ENCODE measurements at regions of chr22 and their contacts with region 1.

Region 1: DNA sequence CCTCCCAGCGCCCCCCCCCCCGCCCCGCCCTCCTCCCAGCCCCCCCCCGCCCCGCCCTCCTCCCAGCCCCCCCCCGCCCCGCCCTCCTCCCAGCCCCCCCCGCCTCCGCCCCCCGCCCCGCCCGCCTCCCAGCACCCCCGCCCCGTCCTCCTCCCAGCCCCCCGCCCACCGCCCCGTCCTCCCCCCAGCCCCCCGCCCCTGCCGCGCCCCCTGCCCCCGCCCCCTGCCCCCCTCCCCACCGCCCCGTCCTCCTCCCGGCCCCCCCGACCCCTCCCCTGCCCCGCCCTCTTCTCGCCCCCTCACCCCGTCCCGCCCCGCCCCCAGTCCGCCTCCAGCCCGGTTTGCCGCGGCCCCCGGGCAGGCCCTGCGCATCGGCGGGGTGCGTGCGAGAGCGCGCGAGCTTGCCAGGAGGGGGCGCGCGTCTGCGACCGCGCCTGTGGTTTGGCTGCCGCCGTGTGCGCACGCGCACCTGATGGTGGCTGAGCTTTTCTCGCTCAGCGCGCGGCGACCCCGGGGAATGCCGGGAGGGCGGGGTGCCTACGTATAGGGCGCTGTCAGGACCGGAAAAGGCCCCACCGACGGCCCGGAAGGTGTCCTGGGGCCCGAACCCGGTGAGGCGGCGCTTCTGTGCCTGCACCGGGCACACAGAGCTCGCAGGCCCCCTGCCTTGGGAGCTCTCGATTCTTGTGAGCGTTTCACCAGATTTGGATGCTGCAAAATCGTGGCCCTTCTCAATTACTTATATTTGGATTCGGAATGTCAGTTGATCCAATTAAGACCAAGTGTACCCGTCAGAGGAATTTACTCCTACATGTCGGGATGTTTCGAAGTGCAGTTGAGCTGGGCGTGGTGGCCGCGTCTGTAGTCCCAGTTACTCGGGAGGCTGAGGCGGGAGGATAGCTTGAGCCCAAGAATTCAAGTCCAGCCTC is 501 bp upstream of the TTLL12 start:
- DNase-seq: peak; percentile 92 to 99 (median 97)
- ATAC-seq: peak; percentile 86
- H3K4me3 ChIP-seq: peak overlapping the region; percentile 60
- H3K4me3 Mint-ChIP-seq: peak overlapping the region; percentile 86
- H3K27ac ChIP-seq: peak overlapping the region; percentile 95 to 97
- H3K27ac Mint-ChIP-seq: peak overlapping the region; percentile 99
- H3K4me1 ChIP-seq: peaks cover 23% of the 10 kb centered on the region
- H3K4me1 Mint-ChIP-seq: peaks cover 25% of the 10 kb centered on the region
- H3K27me3 ChIP-seq: no peaks in the 10 kb centered on the region
- H3K27me3 Mint-ChIP-seq: no peaks in the 10 kb centered on the region
- CTCF ChIP-seq: peak; percentile 52

Region 2: DNA sequence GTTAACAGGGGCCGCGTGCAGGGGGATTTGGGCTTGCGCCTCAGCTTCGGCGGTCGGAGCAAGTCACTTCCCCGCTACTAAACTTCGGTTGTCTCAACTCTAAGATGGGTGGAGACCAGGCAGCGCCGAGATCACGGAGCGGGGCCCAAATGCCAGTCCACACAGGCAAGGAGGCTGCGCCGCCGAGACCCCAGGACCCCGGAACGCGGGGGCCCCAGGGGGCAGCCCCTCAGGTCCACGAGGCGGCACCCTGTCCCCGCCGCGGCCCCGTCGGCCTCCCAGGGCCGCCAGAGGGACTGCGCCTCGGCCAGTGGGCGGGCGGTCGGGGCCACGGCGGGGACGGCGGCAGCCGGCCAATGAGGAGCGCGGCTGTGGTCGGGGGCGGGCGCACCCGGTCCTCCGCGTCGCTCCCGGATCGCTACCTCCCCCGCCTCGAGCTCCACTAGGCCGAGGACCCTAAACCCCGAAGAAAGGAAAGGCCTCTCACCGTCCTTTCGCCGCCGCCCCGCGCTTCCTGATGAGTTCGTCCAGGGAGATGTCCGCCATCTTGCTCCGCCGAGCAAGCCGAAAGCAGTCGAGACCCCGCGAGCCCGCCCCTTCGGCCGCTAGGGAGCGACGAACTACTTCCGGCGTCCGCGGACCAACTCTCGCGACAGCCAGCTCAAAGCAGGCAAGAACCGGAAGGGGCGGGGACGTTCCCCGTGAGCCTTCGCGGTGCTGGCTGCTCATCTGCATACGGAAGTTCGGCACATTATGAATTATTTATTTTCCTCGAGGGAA is 572.9 kb before region 1 on chr22 and contains the start of gene POLDIP3:
- CTCF ChIA-PET with region 1: no interaction called
- POLR2A ChIA-PET with region 1: interaction called, 9 read pairs
- intact Hi-C with region 1: loop called in 1 of 2 experiments (anchors 2 kb)
- DNase-seq: peak; percentile 98 to 99 (median 99)
- ATAC-seq: peak; percentile 69
- H3K4me3 ChIP-seq: peak within 1 kb of the TSS; percentile 91
- H3K4me3 Mint-ChIP-seq: peak within 1 kb of the TSS; percentile 92
- H3K27ac ChIP-seq: peak within 1 kb of the TSS; percentile 83 to 98
- H3K27ac Mint-ChIP-seq: peak within 1 kb of the TSS; percentile 99
- H3K4me1 ChIP-seq: peaks cover 64% of the 10 kb centered on the region
- H3K4me1 Mint-ChIP-seq: peaks cover 60% of the 10 kb centered on the region
- H3K27me3 ChIP-seq: no peaks in the 10 kb centered on the region
- H3K27me3 Mint-ChIP-seq: no peaks in the 10 kb centered on the region
- CTCF ChIP-seq: no peak
- total RNA-seq, gene POLDIP3: 77.7 to 80.7 TPM

Region 3: GRCh38 chr22:43014869-43015676 is 172.4 kb before region 1 on chr22 and contains the start of gene PACSIN2:
- CTCF ChIA-PET with region 1: no interaction called
- POLR2A ChIA-PET with region 1: interaction called, 16 read pairs
- intact Hi-C with region 1: loop called in 1 of 2 experiments (anchors 5 kb)
- DNase-seq: peak; percentile 97 to 99 (median 99)
- ATAC-seq: peak; percentile 97
- H3K4me3 ChIP-seq: peak within 1 kb of the TSS; percentile 91
- H3K4me3 Mint-ChIP-seq: peak within 1 kb of the TSS; percentile 99
- H3K27ac ChIP-seq: peak within 1 kb of the TSS; percentile 75
- H3K27ac Mint-ChIP-seq: peak within 1 kb of the TSS; percentile 98
- H3K4me1 ChIP-seq: peaks cover 23% of the 10 kb centered on the region
- H3K4me1 Mint-ChIP-seq: peaks cover 38% of the 10 kb centered on the region
- H3K27me3 ChIP-seq: no peaks in the 10 kb centered on the region
- H3K27me3 Mint-ChIP-seq: no peaks in the 10 kb centered on the region
- CTCF ChIP-seq: no peak
- total RNA-seq, gene PACSIN2: 23.3 to 25.5 TPM

Region 4: GRCh38 chr22:43110444-43110926 is 77.0 kb before region 1 on chr22 and contains the start of gene BIK:
- CTCF ChIA-PET with region 1: no interaction called
- POLR2A ChIA-PET with region 1: interaction called, 6 read pairs
- intact Hi-C with region 1: loop called (anchors 2 to 5 kb)
- DNase-seq: peak in 13 of 14 experiments; percentile 23 to 72 (median 32)
- ATAC-seq: peak; percentile 48
- H3K4me3 ChIP-seq: peak within 1 kb of the TSS; percentile 58
- H3K4me3 Mint-ChIP-seq: peak within 1 kb of the TSS; percentile 87
- H3K27ac ChIP-seq: no peak within 1 kb of the TSS
- H3K27ac Mint-ChIP-seq: peak within 1 kb of the TSS; percentile 51
- H3K4me1 ChIP-seq: peaks cover 14% of the 10 kb centered on the region
- H3K4me1 Mint-ChIP-seq: peaks cover 9% of the 10 kb centered on the region
- H3K27me3 ChIP-seq: no peaks in the 10 kb centered on the region
- H3K27me3 Mint-ChIP-seq: no peaks in the 10 kb centered on the region
- CTCF ChIP-seq: peak; percentile 26
- total RNA-seq, gene BIK: 1.6 to 2.1 TPM

Region 5: GRCh38 chr22:43151251-43152002 is 36.0 kb before region 1 on chr22 and contains the start of gene TSPO:
- CTCF ChIA-PET with region 1: interaction called, 7 read pairs
- POLR2A ChIA-PET with region 1: interaction called, 28 read pairs
- intact Hi-C with region 1: loop called (anchors 1 to 5 kb)
- DNase-seq: peak; percentile 31 to 82 (median 56)
- ATAC-seq: peak; percentile 47
- H3K4me3 ChIP-seq: peak within 1 kb of the TSS; percentile 74
- H3K4me3 Mint-ChIP-seq: peak within 1 kb of the TSS; percentile 97
- H3K27ac ChIP-seq: peak within 1 kb of the TSS; percentile 56 to 60
- H3K27ac Mint-ChIP-seq: peak within 1 kb of the TSS; percentile 87
- H3K4me1 ChIP-seq: peaks cover 46% of the 10 kb centered on the region
- H3K4me1 Mint-ChIP-seq: peaks cover 35% of the 10 kb centered on the region
- H3K27me3 ChIP-seq: no peaks in the 10 kb centered on the region
- H3K27me3 Mint-ChIP-seq: no peaks in the 10 kb centered on the region
- CTCF ChIP-seq: no peak
- total RNA-seq, gene TSPO: 43.8 to 45.6 TPM

Region 6: GRCh38 chr22:43670513-43670912 is 483.1 kb after region 1 on chr22:
- CTCF ChIA-PET with region 1: no interaction called
- POLR2A ChIA-PET with region 1: no interaction called
- intact Hi-C with region 1: no loop called
- DNase-seq: no peak
- ATAC-seq: no peak
- H3K4me3 ChIP-seq: no peak overlapping the region
- H3K4me3 Mint-ChIP-seq: no peak overlapping the region
- H3K27ac ChIP-seq: no peak overlapping the region
- H3K27ac Mint-ChIP-seq: no peak overlapping the region
- H3K4me1 ChIP-seq: no peaks in the 10 kb centered on the region
- H3K4me1 Mint-ChIP-seq: no peaks in the 10 kb centered on the region
- H3K27me3 ChIP-seq: peaks cover 0 to 7% of the 10 kb centered on the region in 2 experiments
- H3K27me3 Mint-ChIP-seq: peaks cover 5% of the 10 kb centered on the region
- CTCF ChIP-seq: no peak

Measured in CD4-positive, alpha-beta T cell (primary cell).